Activated naive CD4-positive, alpha-beta T cell treated with anti-CD3 and anti-CD28 coated beads, Interleukin-2, amount 10 ng/mL, durations not matched to agents 7 days and 5 days (primary cell): ENCODE measurements at regions of chr2 and their contacts with region 1.

Region 1: GRCh38 chr2:137838255-137839092 is 125.8 kb upstream of the HNMT start:
- DNase-seq: no peak
- H3K4me3 Mint-ChIP-seq: no peak overlapping the region
- H3K27ac Mint-ChIP-seq: no peak overlapping the region
- H3K4me1 Mint-ChIP-seq: no peaks in the 10 kb centered on the region
- H3K27me3 Mint-ChIP-seq: peaks cover 4% of the 10 kb centered on the region

Region 2: GRCh38 chr2:136423516-136423996 is 1414.9 kb before region 1 on chr2:
- CTCF ChIA-PET with region 1: interaction called, 13 read pairs
- DNase-seq: peak; percentile 89
- H3K4me3 Mint-ChIP-seq: peak overlapping the region; percentile 68
- H3K27ac Mint-ChIP-seq: peak overlapping the region; percentile 20
- H3K4me1 Mint-ChIP-seq: peaks cover 23% of the 10 kb centered on the region
- H3K27me3 Mint-ChIP-seq: peaks cover 57% of the 10 kb centered on the region

Region 3: DNA sequence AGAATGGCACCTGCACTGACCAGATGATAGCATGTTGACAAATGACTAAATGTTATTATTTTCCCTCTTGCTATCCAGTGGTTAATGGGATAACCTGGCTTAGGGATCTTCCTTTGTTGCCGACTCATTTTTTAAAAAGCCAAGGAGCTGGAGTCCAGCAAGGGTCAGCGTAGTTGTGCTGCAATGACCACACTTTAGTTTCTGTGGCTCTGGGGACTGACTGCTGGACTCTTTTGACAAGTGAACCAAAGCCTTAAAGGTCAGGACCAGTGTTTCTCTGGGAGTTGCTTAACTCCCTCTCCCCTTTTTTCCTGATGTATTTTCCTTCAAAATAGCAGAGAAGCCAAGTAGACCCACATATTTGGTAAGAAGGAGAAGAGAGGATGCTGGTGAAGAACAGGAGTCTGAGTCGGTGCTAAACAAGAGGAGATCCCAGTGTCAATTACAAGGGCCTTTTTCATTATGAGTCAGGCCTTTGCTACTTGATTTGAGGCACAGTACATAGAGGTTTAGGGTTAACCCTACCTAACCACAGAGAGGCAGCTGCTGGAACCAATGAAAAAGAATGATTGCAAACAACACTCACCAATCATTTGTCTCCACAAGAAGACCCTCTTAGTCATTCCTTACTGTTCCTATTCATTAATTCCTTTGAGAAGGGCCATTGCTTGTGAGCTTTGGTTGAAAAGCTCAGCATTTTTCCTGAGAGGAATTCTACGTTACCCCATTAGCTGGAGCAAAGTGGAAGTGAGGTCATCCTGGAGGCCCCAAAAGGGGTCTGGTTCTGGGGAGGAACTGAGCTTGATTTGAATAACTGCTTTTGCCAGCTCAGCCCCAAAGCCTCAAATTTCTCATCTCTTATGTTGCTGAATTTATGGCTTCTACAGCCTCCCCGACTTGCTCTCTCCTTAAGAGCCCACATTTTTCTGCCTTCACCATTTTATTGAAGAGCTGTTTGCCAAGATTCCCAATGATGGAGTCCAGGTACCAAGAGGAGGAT is 11.8 kb before region 1 on chr2:
- CTCF ChIA-PET with region 1: interaction called, 14 read pairs
- DNase-seq: no peak
- H3K4me3 Mint-ChIP-seq: no peak overlapping the region
- H3K27ac Mint-ChIP-seq: no peak overlapping the region
- H3K4me1 Mint-ChIP-seq: no peaks in the 10 kb centered on the region
- H3K27me3 Mint-ChIP-seq: no peaks in the 10 kb centered on the region

Region 4: GRCh38 chr2:138335036-138335435 is 496.6 kb after region 1 on chr2:
- CTCF ChIA-PET with region 1: no interaction called
- DNase-seq: no peak
- H3K4me3 Mint-ChIP-seq: no peak overlapping the region
- H3K27ac Mint-ChIP-seq: no peak overlapping the region
- H3K4me1 Mint-ChIP-seq: no peaks in the 10 kb centered on the region
- H3K27me3 Mint-ChIP-seq: no peaks in the 10 kb centered on the region

Region 5: DNA sequence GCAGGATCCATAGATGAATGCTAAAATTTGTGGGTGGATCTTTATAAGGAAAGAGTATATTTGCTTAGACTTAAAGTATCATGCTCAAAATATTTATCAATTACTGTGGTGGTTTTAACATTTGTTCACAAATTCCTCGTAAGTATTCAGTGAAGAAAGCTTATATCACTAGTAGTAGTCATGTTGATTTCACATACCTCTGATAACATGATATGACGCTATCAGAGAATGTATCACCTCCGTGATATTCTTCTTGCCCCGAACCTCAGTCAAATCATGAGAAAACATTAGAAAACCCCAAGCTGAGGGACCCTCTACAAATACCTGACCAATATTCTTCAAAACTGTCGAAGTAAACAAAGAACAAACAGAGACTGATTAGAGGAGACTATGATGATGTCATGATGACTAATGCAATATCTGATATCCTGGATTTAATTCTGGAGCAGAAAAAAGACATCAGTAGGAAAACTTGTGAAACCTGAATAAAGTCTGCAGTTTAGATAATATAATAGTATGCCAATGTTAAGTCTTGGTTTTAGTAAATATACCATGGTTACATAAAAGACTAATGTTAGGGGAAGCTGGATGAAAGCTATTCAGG is 577.5 kb after region 1 on chr2:
- CTCF ChIA-PET with region 1: no interaction called
- DNase-seq: no peak
- H3K4me3 Mint-ChIP-seq: no peak overlapping the region
- H3K27ac Mint-ChIP-seq: no peak overlapping the region
- H3K4me1 Mint-ChIP-seq: no peaks in the 10 kb centered on the region
- H3K27me3 Mint-ChIP-seq: no peaks in the 10 kb centered on the region